CD4-positive, alpha-beta T cell (primary cell): ENCODE measurements at regions of chr22 and their contacts with region 1.

Region 1: GRCh38 chr22:33302049-33302545 is 243.9 kb upstream of the SYN3 start:
- DNase-seq: peak in 13 of 14 experiments; percentile 5 to 52 (median 19)
- ATAC-seq: no peak
- H3K4me3 ChIP-seq: no peak overlapping the region
- H3K4me3 Mint-ChIP-seq: no peak overlapping the region
- H3K27ac ChIP-seq: no peak overlapping the region
- H3K27ac Mint-ChIP-seq: no peak overlapping the region
- H3K4me1 ChIP-seq: peaks cover 3% of the 10 kb centered on the region
- H3K4me1 Mint-ChIP-seq: no peaks in the 10 kb centered on the region
- H3K27me3 ChIP-seq: no peaks in the 10 kb centered on the region
- H3K27me3 Mint-ChIP-seq: peaks cover 4% of the 10 kb centered on the region
- CTCF ChIP-seq: peak; percentile 40

Region 2: DNA sequence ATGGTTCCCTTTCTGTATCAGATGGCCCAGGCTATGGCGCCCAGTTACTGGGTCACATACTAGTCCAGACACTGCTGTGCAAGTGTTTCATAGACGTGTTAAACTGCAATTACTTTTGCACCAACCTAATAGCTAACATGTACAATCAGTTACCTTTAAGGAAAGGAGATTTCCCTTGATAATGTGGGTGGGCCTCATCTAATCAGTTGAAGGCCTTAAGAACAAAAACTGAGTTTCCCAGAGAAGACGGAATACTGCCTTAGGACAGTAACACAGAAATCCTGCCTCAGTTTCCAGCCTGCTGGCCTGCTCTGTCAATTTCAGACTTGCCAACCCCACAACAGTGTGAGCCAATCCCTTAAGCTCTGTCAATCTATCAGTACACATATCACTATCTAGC is 14.0 kb before region 1 on chr22:
- CTCF ChIA-PET with region 1: no interaction called
- POLR2A ChIA-PET with region 1: no interaction called
- intact Hi-C with region 1: no loop called
- DNase-seq: no peak
- ATAC-seq: no peak
- H3K4me3 ChIP-seq: no peak overlapping the region
- H3K4me3 Mint-ChIP-seq: no peak overlapping the region
- H3K27ac ChIP-seq: no peak overlapping the region
- H3K27ac Mint-ChIP-seq: no peak overlapping the region
- H3K4me1 ChIP-seq: no peaks in the 10 kb centered on the region
- H3K4me1 Mint-ChIP-seq: no peaks in the 10 kb centered on the region
- H3K27me3 ChIP-seq: no peaks in the 10 kb centered on the region
- H3K27me3 Mint-ChIP-seq: no peaks in the 10 kb centered on the region
- CTCF ChIP-seq: no peak

Region 3: GRCh38 chr22:33513388-33514338 is 211.6 kb after region 1 on chr22:
- CTCF ChIA-PET with region 1: no interaction called
- POLR2A ChIA-PET with region 1: no interaction called
- intact Hi-C with region 1: no loop called
- DNase-seq: no peak
- ATAC-seq: no peak
- H3K4me3 ChIP-seq: no peak overlapping the region
- H3K4me3 Mint-ChIP-seq: no peak overlapping the region
- H3K27ac ChIP-seq: no peak overlapping the region
- H3K27ac Mint-ChIP-seq: no peak overlapping the region
- H3K4me1 ChIP-seq: no peaks in the 10 kb centered on the region
- H3K4me1 Mint-ChIP-seq: no peaks in the 10 kb centered on the region
- H3K27me3 ChIP-seq: no peaks in the 10 kb centered on the region
- H3K27me3 Mint-ChIP-seq: no peaks in the 10 kb centered on the region
- CTCF ChIP-seq: no peak

Region 4: GRCh38 chr22:33579448-33580093 is 277.5 kb after region 1 on chr22:
- CTCF ChIA-PET with region 1: no interaction called
- POLR2A ChIA-PET with region 1: no interaction called
- intact Hi-C with region 1: loop called in 1 of 2 experiments (anchors 2 kb)
- DNase-seq: peak in 6 of 14 experiments; percentile 1 to 29 (median 12)
- ATAC-seq: no peak
- H3K4me3 ChIP-seq: no peak overlapping the region
- H3K4me3 Mint-ChIP-seq: no peak overlapping the region
- H3K27ac ChIP-seq: no peak overlapping the region
- H3K27ac Mint-ChIP-seq: no peak overlapping the region
- H3K4me1 ChIP-seq: no peaks in the 10 kb centered on the region
- H3K4me1 Mint-ChIP-seq: no peaks in the 10 kb centered on the region
- H3K27me3 ChIP-seq: no peaks in the 10 kb centered on the region
- H3K27me3 Mint-ChIP-seq: no peaks in the 10 kb centered on the region
- CTCF ChIP-seq: peak; percentile 53

Region 5: GRCh38 chr22:35023692-35024363 is 1721.7 kb after region 1 on chr22:
- CTCF ChIA-PET with region 1: no interaction called
- POLR2A ChIA-PET with region 1: no interaction called
- intact Hi-C with region 1: loop called in 1 of 2 experiments (anchors 5 kb)
- DNase-seq: peak in 13 of 14 experiments; percentile 6 to 58 (median 26)
- ATAC-seq: no peak
- H3K4me3 ChIP-seq: no peak overlapping the region
- H3K4me3 Mint-ChIP-seq: no peak overlapping the region
- H3K27ac ChIP-seq: no peak overlapping the region
- H3K27ac Mint-ChIP-seq: no peak overlapping the region
- H3K4me1 ChIP-seq: no peaks in the 10 kb centered on the region
- H3K4me1 Mint-ChIP-seq: no peaks in the 10 kb centered on the region
- H3K27me3 ChIP-seq: peaks cover 6 to 8% of the 10 kb centered on the region in 2 experiments
- H3K27me3 Mint-ChIP-seq: peaks cover 68% of the 10 kb centered on the region
- CTCF ChIP-seq: peak; percentile 59

Region 6: DNA sequence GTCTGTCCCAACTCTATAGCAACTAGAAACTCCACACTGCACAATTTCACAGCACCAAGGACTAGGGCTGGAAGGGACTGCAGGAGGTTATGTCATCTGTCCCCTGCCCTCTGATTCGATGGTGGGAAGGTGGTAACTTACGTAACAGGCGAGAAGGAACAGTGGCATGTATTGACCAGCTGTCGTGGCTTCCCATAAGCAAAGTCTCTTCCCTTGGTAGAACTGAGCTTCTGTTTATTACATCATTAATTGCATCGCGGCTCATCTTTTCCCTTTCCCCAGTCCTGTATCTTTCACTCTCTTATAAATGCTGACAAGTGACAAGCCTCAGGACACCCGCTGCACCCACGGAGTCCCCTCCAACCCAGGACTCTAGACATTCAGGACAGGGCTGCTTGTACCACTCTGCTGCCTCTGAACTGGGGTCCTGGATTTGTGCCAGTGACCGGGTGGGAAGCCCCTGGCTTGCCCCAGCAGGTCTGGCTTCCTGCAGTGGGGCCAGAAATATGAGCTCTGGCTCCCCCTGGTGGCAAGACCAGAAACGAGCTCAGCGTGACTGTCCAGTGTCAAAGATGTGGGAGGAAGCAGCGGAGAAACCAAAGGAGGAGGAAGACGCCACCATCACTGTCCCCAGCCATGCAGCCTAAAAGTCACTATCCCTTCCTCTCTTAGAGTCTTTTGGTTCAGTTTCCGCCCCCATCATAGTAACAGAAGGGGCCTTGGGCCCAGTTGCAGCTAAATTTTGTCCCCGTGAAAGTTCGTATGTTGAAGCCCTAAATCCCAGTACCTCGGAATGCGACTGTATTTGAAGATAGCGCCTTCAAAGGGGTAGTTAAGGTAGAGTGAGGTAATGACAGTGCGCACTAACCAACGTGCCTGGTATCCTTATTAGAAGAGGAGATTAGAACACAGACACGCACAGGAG is 1848.3 kb after region 1 on chr22:
- CTCF ChIA-PET with region 1: no interaction called
- POLR2A ChIA-PET with region 1: no interaction called
- intact Hi-C with region 1: loop called in 1 of 2 experiments (anchors 10 kb)
- DNase-seq: peak; percentile 19 to 64 (median 39)
- ATAC-seq: no peak
- H3K4me3 ChIP-seq: no peak overlapping the region
- H3K4me3 Mint-ChIP-seq: no peak overlapping the region
- H3K27ac ChIP-seq: no peak overlapping the region
- H3K27ac Mint-ChIP-seq: no peak overlapping the region
- H3K4me1 ChIP-seq: peaks cover 5% of the 10 kb centered on the region
- H3K4me1 Mint-ChIP-seq: no peaks in the 10 kb centered on the region
- H3K27me3 ChIP-seq: peaks cover 10 to 18% of the 10 kb centered on the region in 2 experiments
- H3K27me3 Mint-ChIP-seq: peaks cover 73% of the 10 kb centered on the region
- CTCF ChIP-seq: peak; percentile 71

Region 7: GRCh38 chr22:35231585-35232084 is 1929.5 kb after region 1 on chr22:
- CTCF ChIA-PET with region 1: no interaction called
- POLR2A ChIA-PET with region 1: no interaction called
- intact Hi-C with region 1: loop called in 1 of 2 experiments (anchors 5 kb)
- DNase-seq: peak; percentile 54 to 85 (median 62)
- ATAC-seq: peak; percentile 93
- H3K4me3 ChIP-seq: no peak overlapping the region
- H3K4me3 Mint-ChIP-seq: no peak overlapping the region
- H3K27ac ChIP-seq: no peak overlapping the region
- H3K27ac Mint-ChIP-seq: no peak overlapping the region
- H3K4me1 ChIP-seq: peaks cover 4% of the 10 kb centered on the region
- H3K4me1 Mint-ChIP-seq: no peaks in the 10 kb centered on the region
- H3K27me3 ChIP-seq: peaks cover 0 to 5% of the 10 kb centered on the region in 2 experiments
- H3K27me3 Mint-ChIP-seq: peaks cover 37% of the 10 kb centered on the region
- CTCF ChIP-seq: peak; percentile 82